CD4-positive, alpha-beta T cell (primary cell): ENCODE measurements at regions of chr2 and their contacts with region 1.

Region 1: GRCh38 chr2:97728091-97728731 is 14.8 kb downstream of the ZAP70 start:
- DNase-seq: peak in 6 of 14 experiments; percentile 20 to 42 (median 31)
- ATAC-seq: peak; percentile 75
- H3K4me3 ChIP-seq: no peak overlapping the region
- H3K4me3 Mint-ChIP-seq: no peak overlapping the region
- H3K27ac ChIP-seq: peak overlapping the region in 1 of 2 donors; percentile 51
- H3K27ac Mint-ChIP-seq: peak overlapping the region; percentile 85
- H3K4me1 ChIP-seq: peaks cover 79% of the 10 kb centered on the region
- H3K4me1 Mint-ChIP-seq: peaks cover 63% of the 10 kb centered on the region
- H3K27me3 ChIP-seq: no peaks in the 10 kb centered on the region
- H3K27me3 Mint-ChIP-seq: no peaks in the 10 kb centered on the region
- CTCF ChIP-seq: no peak

Region 2: DNA sequence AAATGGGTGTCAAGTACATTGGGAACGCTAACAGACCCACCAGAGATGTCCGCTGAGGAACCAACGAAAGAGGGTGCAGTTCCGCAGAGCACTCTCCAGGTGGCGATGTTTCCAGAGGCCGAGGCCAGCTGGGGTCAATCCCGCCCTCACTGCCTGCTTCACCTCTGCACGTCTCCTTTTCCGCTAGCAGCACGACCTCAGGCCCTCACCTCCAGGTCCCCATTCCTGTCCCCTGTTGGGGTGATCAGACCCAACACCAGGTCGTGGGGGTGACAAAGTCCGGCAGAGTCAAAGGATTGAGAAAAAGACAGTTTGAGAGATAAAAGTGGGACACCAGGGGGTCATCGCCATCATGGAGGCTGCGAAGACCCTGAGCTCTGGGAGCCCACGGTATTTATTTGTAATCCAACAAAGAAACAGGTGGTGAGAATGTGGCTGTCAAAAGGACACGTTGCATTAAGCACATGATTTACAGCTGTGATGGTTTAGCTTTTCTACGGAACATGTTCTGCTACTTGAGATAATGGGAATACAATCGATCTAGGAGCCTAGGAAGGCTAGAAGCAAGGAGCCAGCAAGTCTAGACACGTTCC is 12.5 kb after region 1 on chr2:
- CTCF ChIA-PET with region 1: interaction called, 11 read pairs
- POLR2A ChIA-PET with region 1: no interaction called
- intact Hi-C with region 1: no loop called
- DNase-seq: peak in 7 of 14 experiments; percentile 31 to 72 (median 48)
- ATAC-seq: peak; percentile 27
- H3K4me3 ChIP-seq: no peak overlapping the region
- H3K4me3 Mint-ChIP-seq: no peak overlapping the region
- H3K27ac ChIP-seq: no peak overlapping the region
- H3K27ac Mint-ChIP-seq: peak overlapping the region; percentile 79
- H3K4me1 ChIP-seq: peaks cover 59% of the 10 kb centered on the region
- H3K4me1 Mint-ChIP-seq: peaks cover 65% of the 10 kb centered on the region
- H3K27me3 ChIP-seq: no peaks in the 10 kb centered on the region
- H3K27me3 Mint-ChIP-seq: no peaks in the 10 kb centered on the region
- CTCF ChIP-seq: peak; percentile 65